Transverse colon (tissue), 4 donors: ENCODE measurements at regions of chr1 and their contacts with region 1.

Region 1: GRCh38 chr1:1794999-1795398 is 16.7 kb upstream of the NADK start:
- DNase-seq: no peak
- H3K4me3 ChIP-seq: no peak overlapping the region
- H3K27ac ChIP-seq: no peak overlapping the region
- H3K4me1 ChIP-seq: no peaks in the 10 kb centered on the region
- H3K27me3 ChIP-seq: no peaks in the 10 kb centered on the region
- CTCF ChIP-seq: no peak
- EP300 ChIP-seq: no peak
- POLR2A ChIP-seq: no peak

Region 2: DNA sequence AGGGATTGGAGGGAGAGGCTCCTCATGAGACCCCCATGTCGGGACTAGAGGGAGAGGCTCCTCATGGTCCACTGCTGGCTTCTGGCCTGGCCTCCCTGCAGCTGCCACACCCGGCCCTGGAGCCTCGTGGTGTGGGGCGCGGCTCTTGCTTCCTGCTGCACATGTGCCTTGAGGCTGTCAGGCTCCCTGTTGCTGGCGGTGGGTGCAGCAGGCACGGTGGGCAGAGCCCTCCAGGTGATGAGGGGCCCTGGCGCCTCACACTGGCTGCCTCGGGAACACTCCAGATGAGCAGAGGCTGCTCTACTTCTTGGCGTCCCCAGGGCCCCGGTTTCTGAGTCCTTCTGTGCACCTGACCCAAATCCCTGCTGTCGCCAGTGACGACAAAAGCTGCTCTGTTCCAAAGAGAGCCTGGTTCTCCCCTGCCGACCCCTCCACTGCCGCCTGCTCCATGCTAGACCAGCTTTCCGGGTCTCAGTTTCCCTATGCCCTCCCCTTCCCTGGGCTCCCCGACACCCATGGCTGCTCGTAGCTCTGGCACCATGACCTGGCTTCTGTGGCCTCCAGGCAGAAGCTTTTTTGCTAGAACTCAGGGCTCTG is 333.2 kb before region 1 on chr1:
- in situ Hi-C with region 1: no loop called
- intact Hi-C with region 1: no loop called
- DNase-seq: peak; percentile 53
- H3K4me3 ChIP-seq: no peak overlapping the region
- H3K27ac ChIP-seq: peak overlapping the region in 1 of 4 donors; percentile 51
- H3K4me1 ChIP-seq: peaks cover 0 to 7% (median 0%) of the 10 kb centered on the region in 4 donors
- H3K27me3 ChIP-seq: no peaks in the 10 kb centered on the region
- CTCF ChIP-seq: no peak
- EP300 ChIP-seq: no peak
- POLR2A ChIP-seq: no peak

Region 3: DNA sequence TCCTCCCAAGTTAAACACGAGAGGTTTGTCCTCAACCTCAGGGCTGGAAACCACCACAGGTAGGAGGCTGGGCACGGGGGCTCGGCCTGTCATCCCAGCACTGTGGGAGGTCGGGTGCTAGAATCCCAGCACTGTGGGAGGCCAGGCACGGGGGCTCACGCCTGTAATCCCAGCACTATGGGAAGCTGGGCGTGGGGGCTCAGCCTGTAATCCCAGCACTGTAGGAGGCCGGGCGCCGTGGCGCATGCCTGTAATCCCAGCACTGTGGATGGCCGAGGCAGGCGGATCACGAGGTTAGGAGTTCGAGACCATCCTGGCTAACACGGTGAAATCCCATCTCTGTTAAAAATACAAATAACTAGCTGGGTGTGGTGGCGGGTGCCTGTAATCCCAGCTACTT is 64.1 kb before region 1 on chr1:
- in situ Hi-C with region 1: no loop called
- intact Hi-C with region 1: no loop called
- DNase-seq: no peak
- H3K4me3 ChIP-seq: no peak overlapping the region
- H3K27ac ChIP-seq: no peak overlapping the region
- H3K4me1 ChIP-seq: peaks cover 0 to 12% (median 0%) of the 10 kb centered on the region in 4 donors
- H3K27me3 ChIP-seq: no peaks in the 10 kb centered on the region
- CTCF ChIP-seq: no peak
- EP300 ChIP-seq: no peak
- POLR2A ChIP-seq: no peak

Region 4: GRCh38 chr1:1752665-1753606 is 42.1 kb before region 1 on chr1:
- in situ Hi-C with region 1: no loop called
- intact Hi-C with region 1: no loop called
- DNase-seq: no peak
- H3K4me3 ChIP-seq: no peak overlapping the region
- H3K27ac ChIP-seq: no peak overlapping the region
- H3K4me1 ChIP-seq: peaks cover 2 to 4% (median 3%) of the 10 kb centered on the region in 4 donors
- H3K27me3 ChIP-seq: no peaks in the 10 kb centered on the region
- CTCF ChIP-seq: no peak
- EP300 ChIP-seq: no peak
- POLR2A ChIP-seq: no peak

Region 5: DNA sequence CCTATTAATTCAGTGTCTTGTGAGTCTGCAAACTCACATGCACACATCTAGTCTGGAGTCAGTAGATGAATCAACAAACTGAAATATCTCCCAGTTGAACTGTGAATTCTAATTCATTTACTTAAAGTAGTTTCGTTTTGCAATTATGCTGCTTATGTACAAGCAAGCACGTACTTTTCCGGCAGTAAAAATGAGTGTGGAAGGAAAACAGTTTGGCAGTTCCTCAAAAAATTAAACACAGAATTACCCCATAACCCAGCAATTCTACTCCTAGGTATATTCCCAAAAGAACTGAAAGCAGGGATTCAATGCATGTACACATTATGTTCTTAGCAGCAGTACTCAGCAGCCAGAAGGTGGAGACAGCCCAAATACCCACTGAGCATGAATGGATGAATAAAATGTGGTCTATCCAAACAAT is 46.6 kb after region 1 on chr1:
- in situ Hi-C with region 1: loop called in 1 of 4 experiments (anchors 5 kb)
- intact Hi-C with region 1: no loop called
- DNase-seq: no peak
- H3K4me3 ChIP-seq: no peak overlapping the region
- H3K27ac ChIP-seq: peak overlapping the region; percentile 3 to 33 (median 13)
- H3K4me1 ChIP-seq: peaks cover 19 to 50% (median 31%) of the 10 kb centered on the region in 4 donors
- H3K27me3 ChIP-seq: no peaks in the 10 kb centered on the region
- CTCF ChIP-seq: no peak
- EP300 ChIP-seq: no peak
- POLR2A ChIP-seq: no peak

Region 6: DNA sequence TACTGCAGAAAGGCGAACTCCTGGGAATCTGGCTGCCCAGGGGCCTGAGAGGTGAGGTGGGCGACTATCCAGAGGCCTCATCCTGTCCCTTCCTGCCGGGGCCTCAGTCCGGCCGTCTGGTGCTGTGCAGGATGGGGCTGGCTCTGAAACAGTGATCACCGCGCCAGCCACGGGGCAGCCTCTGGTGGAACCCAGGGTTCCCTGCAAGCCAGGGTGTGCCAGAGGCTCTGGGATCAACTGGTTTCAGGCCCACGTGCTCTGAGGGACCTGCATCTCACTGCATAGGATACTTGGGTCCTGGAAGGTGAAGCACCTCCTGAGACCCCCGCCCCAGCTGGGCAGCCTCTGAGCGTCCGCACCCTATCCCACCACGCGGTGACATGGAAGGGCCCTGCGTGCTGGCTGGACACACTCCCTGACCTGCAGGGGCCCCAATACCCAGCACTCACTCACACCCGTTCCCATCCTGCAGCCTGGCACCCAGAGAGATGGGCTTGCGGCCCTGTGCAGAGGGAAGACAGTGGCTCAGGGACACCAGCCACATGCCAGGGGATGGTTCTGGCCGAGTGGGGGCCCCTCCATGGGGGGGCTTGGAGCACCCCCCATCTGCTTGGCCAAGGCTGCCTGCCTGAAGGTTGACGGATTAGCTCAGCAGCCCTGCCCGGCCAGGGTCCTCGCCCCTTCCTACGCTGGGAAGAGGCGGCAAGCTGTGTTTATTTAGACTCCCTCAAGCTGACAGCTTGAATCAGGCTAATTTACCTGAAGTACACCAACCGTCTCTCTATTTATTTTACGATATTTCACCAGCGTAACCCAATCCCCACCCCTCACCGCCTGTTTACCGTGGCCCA is 1070.8 kb after region 1 on chr1:
- in situ Hi-C with region 1: no loop called
- intact Hi-C with region 1: no loop called
- DNase-seq: no peak
- H3K4me3 ChIP-seq: no peak overlapping the region
- H3K27ac ChIP-seq: no peak overlapping the region
- H3K4me1 ChIP-seq: no peaks in the 10 kb centered on the region
- H3K27me3 ChIP-seq: peaks cover 56% of the 10 kb centered on the region
- CTCF ChIP-seq: no peak
- EP300 ChIP-seq: no peak
- POLR2A ChIP-seq: no peak